IMR-90 (cell line): ENCODE measurements at regions of chr4 and their contacts with region 1.

Region 1: DNA sequence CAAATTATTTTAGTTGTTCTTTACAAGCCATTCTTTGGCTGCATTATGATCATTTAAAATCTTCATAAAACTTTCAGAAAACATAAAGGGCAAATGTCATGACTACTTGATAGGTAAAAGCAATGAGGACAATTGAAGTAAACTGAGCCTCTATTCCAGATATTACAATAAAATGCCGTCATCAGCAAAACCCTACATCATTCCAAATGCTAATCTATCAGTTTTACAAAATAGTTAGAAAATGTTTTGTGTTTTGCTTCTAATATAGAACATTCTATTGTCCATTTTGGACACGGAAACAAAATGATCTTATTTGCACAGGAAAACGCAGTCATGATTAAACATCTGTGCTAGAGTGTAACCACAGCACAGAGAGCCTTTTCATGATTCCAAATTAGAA is 1330.6 kb upstream of the ADGRL3 start:
- DNase-seq: no peak
- ATAC-seq: no peak
- H3K4me3 ChIP-seq: no peak overlapping the region
- H3K27ac ChIP-seq: no peak overlapping the region
- H3K4me1 ChIP-seq: no peaks in the 10 kb centered on the region
- H3K27me3 ChIP-seq: no peaks in the 10 kb centered on the region
- CTCF ChIP-seq: no peak
- POLR2A ChIP-seq: no peak
- RAD21 ChIP-seq: no peak

Region 2: GRCh38 chr4:59484944-59485343 is 384.6 kb before region 1 on chr4:
- CTCF ChIA-PET with region 1: no interaction called
- POLR2A ChIA-PET with region 1: no interaction called
- dilution Hi-C with region 1: no loop called
- in situ Hi-C with region 1: no loop called
- intact Hi-C with region 1: no loop called
- DNase-seq: no peak
- ATAC-seq: no peak
- H3K4me3 ChIP-seq: no peak overlapping the region
- H3K27ac ChIP-seq: no peak overlapping the region
- H3K4me1 ChIP-seq: no peaks in the 10 kb centered on the region
- H3K27me3 ChIP-seq: no peaks in the 10 kb centered on the region
- CTCF ChIP-seq: no peak
- POLR2A ChIP-seq: no peak
- RAD21 ChIP-seq: no peak

Region 3: DNA sequence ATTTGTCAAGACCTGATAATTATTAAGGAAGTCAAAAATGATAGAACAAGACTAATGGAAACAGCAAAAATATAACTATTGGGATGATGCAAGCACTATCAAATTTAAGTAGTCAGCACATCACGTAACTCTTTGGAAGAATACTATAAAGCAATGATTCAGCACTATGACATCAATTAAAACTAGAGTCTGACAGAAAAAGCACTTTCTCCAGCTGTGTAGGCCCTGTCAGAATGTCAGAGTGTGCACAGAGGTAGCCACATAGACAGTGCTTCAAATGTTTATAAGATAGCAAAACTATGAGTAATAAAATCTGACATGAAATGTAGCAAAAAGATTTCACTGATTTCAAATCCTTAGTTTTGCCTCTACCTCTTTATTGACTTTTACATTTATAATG is 103.9 kb after region 1 on chr4:
- CTCF ChIA-PET with region 1: no interaction called
- POLR2A ChIA-PET with region 1: no interaction called
- dilution Hi-C with region 1: no loop called
- in situ Hi-C with region 1: no loop called
- intact Hi-C with region 1: loop called (anchors 5 kb)
- DNase-seq: no peak
- ATAC-seq: no peak
- H3K4me3 ChIP-seq: no peak overlapping the region
- H3K27ac ChIP-seq: no peak overlapping the region
- H3K4me1 ChIP-seq: no peaks in the 10 kb centered on the region
- H3K27me3 ChIP-seq: no peaks in the 10 kb centered on the region
- CTCF ChIP-seq: no peak
- POLR2A ChIP-seq: no peak
- RAD21 ChIP-seq: no peak